PC-9 (cell line): ENCODE measurements at regions of chr11 and their contacts with region 1.

Region 1: DNA sequence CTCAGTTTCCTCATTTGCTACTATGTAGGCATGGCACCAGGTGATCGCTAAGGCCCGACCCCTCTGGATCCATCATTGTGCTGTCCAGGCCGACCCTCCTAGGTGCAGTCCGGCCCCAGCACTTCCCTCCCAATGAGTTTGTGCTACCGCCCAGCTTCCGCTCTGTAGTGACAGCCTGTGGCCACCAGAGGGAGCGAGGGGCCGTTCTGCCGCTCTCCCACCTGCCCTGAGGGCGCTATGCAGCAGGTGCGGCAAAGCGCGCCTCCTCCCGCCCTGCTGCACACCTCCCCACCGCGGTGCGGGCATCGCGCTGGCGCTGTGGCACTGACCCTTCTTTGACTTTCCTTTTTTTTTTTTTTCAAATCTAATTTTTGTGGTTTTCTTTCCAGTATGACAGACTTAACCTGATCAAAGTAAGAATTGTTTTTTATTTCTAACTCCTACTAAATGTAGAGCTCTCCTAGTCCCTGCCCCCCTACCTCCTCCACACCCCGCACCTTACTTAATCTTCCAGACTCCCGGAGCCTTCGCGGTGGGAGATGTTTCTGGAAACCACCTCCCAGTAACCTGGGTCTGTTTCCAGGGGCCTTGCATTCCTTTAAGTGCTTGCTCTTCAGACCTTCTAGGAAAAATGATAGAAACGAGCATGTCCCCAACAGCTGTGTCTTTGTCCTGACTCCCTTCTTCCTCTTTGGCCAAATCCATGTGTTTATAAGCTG is 73.7 kb downstream of the SCN3B start:
- DNase-seq: peak; percentile 56 to 73
- H3K4me3 ChIP-seq: no peak overlapping the region
- H3K27ac ChIP-seq: no peak overlapping the region
- H3K4me1 ChIP-seq: no peaks in the 10 kb centered on the region
- H3K27me3 ChIP-seq: no peaks in the 10 kb centered on the region
- CTCF ChIP-seq: peak; percentile 93

Region 2: GRCh38 chr11:123261345-123262106 is 319.2 kb before region 1 on chr11:
- CTCF ChIA-PET with region 1: no interaction called
- POLR2A ChIA-PET with region 1: no interaction called
- intact Hi-C with region 1: loop called (anchors 5 kb)
- DNase-seq: peak; percentile 78 to 86
- H3K4me3 ChIP-seq: peak overlapping the region; percentile 32; the same call in 1 of the 2 replicates
- H3K27ac ChIP-seq: no peak overlapping the region
- H3K4me1 ChIP-seq: peaks cover 15% of the 10 kb centered on the region
- H3K27me3 ChIP-seq: no peaks in the 10 kb centered on the region
- CTCF ChIP-seq: peak; percentile 90

Region 3: GRCh38 chr11:123407130-123407995 is 173.4 kb before region 1 on chr11:
- CTCF ChIA-PET with region 1: interaction called, 4 read pairs
- POLR2A ChIA-PET with region 1: no interaction called
- intact Hi-C with region 1: loop called (anchors 1 kb)
- DNase-seq: peak; percentile 55 to 60
- H3K4me3 ChIP-seq: no peak overlapping the region
- H3K27ac ChIP-seq: no peak overlapping the region
- H3K4me1 ChIP-seq: no peaks in the 10 kb centered on the region
- H3K27me3 ChIP-seq: no peaks in the 10 kb centered on the region
- CTCF ChIP-seq: peak; percentile 88

Region 4: DNA sequence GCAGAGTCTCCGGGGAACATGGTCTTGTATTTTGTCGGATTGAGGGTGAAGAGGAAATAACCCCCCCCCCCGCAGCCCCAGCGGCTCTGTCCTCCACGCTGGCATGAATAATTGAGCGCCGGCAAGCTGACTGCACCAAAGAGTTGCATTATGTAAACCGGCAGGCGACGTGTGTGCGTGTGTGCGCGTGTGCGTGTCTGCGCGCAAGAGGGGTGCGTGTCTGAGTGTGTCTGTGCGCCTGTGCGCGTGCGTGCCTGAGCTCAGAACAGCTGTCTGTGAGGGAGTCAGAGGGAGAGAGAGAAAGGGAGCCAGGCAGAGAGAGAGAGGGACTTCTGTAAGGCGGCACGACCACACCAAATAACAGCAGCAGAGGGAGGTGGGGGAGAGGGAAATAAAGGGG is 20.7 kb before region 1 on chr11:
- CTCF ChIA-PET with region 1: no interaction called
- POLR2A ChIA-PET with region 1: no interaction called
- intact Hi-C with region 1: no loop called
- DNase-seq: no peak
- H3K4me3 ChIP-seq: no peak overlapping the region
- H3K27ac ChIP-seq: no peak overlapping the region
- H3K4me1 ChIP-seq: no peaks in the 10 kb centered on the region
- H3K27me3 ChIP-seq: no peaks in the 10 kb centered on the region
- CTCF ChIP-seq: no peak

Region 5: GRCh38 chr11:123601136-123601535 is 20.4 kb after region 1 on chr11:
- CTCF ChIA-PET with region 1: no interaction called
- POLR2A ChIA-PET with region 1: no interaction called
- intact Hi-C with region 1: no loop called
- DNase-seq: no peak
- H3K4me3 ChIP-seq: no peak overlapping the region
- H3K27ac ChIP-seq: no peak overlapping the region
- H3K4me1 ChIP-seq: no peaks in the 10 kb centered on the region
- H3K27me3 ChIP-seq: no peaks in the 10 kb centered on the region
- CTCF ChIP-seq: no peak

Region 6: GRCh38 chr11:123640677-123641494 is 60.2 kb after region 1 on chr11:
- CTCF ChIA-PET with region 1: no interaction called
- POLR2A ChIA-PET with region 1: no interaction called
- intact Hi-C with region 1: loop called (anchors 2 kb)
- DNase-seq: peak in 1 of 2 experiments; percentile 19
- H3K4me3 ChIP-seq: no peak overlapping the region
- H3K27ac ChIP-seq: no peak overlapping the region
- H3K4me1 ChIP-seq: no peaks in the 10 kb centered on the region
- H3K27me3 ChIP-seq: peaks cover 75% of the 10 kb centered on the region
- CTCF ChIP-seq: peak; percentile 89

Region 7: GRCh38 chr11:123707606-123708205 is 127.0 kb after region 1 on chr11:
- CTCF ChIA-PET with region 1: interaction called, 22 read pairs
- POLR2A ChIA-PET with region 1: no interaction called
- intact Hi-C with region 1: loop called (anchors 1 kb)
- DNase-seq: peak in 1 of 2 experiments; percentile 54
- H3K4me3 ChIP-seq: no peak overlapping the region
- H3K27ac ChIP-seq: no peak overlapping the region
- H3K4me1 ChIP-seq: no peaks in the 10 kb centered on the region
- H3K27me3 ChIP-seq: peaks cover 18% of the 10 kb centered on the region; the same call in 1 of the 2 replicates
- CTCF ChIP-seq: peak; percentile 79